CD4-positive, alpha-beta memory T cell (primary cell): ENCODE measurements at regions of chr10 and their contacts with region 1.

Region 1: GRCh38 chr10:14837757-14838581 is at the starts of genes CDNF, HSPA14 and MSANTD7:
- DNase-seq: peak; percentile 98 to 99 (median 99)
- H3K4me3 ChIP-seq: peak within 1 kb of the TSS; percentile 68 to 79
- H3K4me3 Mint-ChIP-seq: peak within 1 kb of the TSS; percentile 89 to 97 (median 94)
- H3K27ac ChIP-seq: peak within 1 kb of the TSS; percentile 91
- H3K27ac Mint-ChIP-seq: peak within 1 kb of the TSS; percentile 86 to 99 (median 98)
- H3K4me1 ChIP-seq: peaks cover 26% of the 10 kb centered on the region
- H3K4me1 Mint-ChIP-seq: peaks cover 14 to 33% (median 26%) of the 10 kb centered on the region in 4 donors
- H3K27me3 ChIP-seq: no peaks in the 10 kb centered on the region
- H3K27me3 Mint-ChIP-seq: no peaks in the 10 kb centered on the region
- total RNA-seq, gene CDNF: 1.7 to 2.5 TPM
- total RNA-seq, gene HSPA14: 16.0 to 17.7 TPM
- total RNA-seq, gene MSANTD7: 16.2 to 17.0 TPM

Region 2: DNA sequence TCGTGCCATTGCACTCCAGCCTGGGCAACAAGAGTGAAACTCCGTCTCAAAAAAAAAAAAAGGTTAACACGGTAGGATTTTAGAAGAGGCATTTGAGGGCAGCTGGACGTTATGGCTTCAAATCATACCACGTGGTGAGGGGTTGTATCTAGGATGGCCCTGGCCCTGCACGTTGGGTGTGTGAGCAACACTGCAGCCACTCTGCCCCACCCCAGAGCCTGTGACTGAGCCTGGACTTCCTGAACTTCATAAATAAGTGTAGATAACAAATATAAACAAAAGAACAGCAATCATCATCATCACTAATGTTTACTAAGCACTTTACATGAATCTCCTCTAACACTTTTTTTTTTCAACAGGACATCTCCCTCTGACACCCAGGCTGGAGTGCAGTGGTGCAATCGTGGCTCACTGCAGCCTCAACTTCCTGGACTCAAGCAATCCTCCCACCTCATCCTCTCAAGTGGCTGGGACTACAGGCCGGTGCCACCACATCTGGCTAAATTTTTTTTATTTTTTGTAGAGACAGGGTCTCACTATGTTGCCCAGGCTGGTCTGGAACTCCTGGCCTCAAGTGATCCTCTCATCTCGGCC is 337.7 kb before region 1 on chr10:
- CTCF ChIA-PET with region 1: interaction called, 4 read pairs
- POLR2A ChIA-PET with region 1: interaction called, 3 read pairs
- intact Hi-C with region 1: loop called (anchors 1 kb)
- DNase-seq: no peak
- H3K4me3 ChIP-seq: no peak overlapping the region
- H3K4me3 Mint-ChIP-seq: no peak overlapping the region
- H3K27ac ChIP-seq: no peak overlapping the region
- H3K27ac Mint-ChIP-seq: peak overlapping the region in 4 of 7 donors; percentile 7 to 72 (median 38)
- H3K4me1 ChIP-seq: peaks cover 6% of the 10 kb centered on the region
- H3K4me1 Mint-ChIP-seq: peaks cover 5 to 12% (median 7%) of the 10 kb centered on the region in 4 donors
- H3K27me3 ChIP-seq: no peaks in the 10 kb centered on the region
- H3K27me3 Mint-ChIP-seq: peaks cover 0 to 2% of the 10 kb centered on the region in 2 donors

Region 3: GRCh38 chr10:14556285-14556956 is 281.5 kb before region 1 on chr10:
- CTCF ChIA-PET with region 1: interaction called, 4 read pairs
- POLR2A ChIA-PET with region 1: interaction called, 11 read pairs
- intact Hi-C with region 1: loop called (anchors 5 kb)
- DNase-seq: peak in 4 of 5 donors; percentile 34 to 64 (median 47)
- H3K4me3 ChIP-seq: no peak overlapping the region
- H3K4me3 Mint-ChIP-seq: peak overlapping the region; percentile 53 to 87 (median 75)
- H3K27ac ChIP-seq: peak overlapping the region; percentile 65
- H3K27ac Mint-ChIP-seq: peak overlapping the region; percentile 93 to 97 (median 94)
- H3K4me1 ChIP-seq: peaks cover 100% of the 10 kb centered on the region
- H3K4me1 Mint-ChIP-seq: peaks cover 80 to 99% (median 89%) of the 10 kb centered on the region in 4 donors
- H3K27me3 ChIP-seq: no peaks in the 10 kb centered on the region
- H3K27me3 Mint-ChIP-seq: no peaks in the 10 kb centered on the region

Region 4: DNA sequence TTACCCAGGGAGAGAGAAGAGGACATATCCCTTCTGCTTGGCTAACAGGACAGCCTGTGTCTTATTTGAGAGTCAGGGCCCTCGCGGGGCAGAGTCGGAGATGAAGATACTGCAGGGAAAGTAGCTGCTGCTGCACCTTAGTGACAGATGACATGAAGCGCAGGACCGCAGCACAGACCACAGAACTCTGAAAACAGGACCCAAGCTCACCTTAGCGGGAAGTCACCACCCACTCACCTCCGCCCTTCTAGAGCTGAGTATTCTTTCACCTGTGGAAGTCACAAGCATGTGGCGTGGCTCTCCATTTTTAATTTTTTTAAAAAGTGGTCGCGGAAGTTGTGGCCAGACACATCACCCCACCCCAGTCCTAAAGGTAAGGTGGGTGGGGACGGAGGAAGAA is 254.7 kb before region 1 on chr10:
- CTCF ChIA-PET with region 1: no interaction called
- POLR2A ChIA-PET with region 1: interaction called, 15 read pairs
- intact Hi-C with region 1: loop called (anchors 5 kb)
- DNase-seq: peak; percentile 84 to 94 (median 89)
- H3K4me3 ChIP-seq: peak overlapping the region in 1 of 2 donors; percentile 15
- H3K4me3 Mint-ChIP-seq: peak overlapping the region; percentile 75 to 90 (median 82)
- H3K27ac ChIP-seq: peak overlapping the region; percentile 86
- H3K27ac Mint-ChIP-seq: peak overlapping the region; percentile 96 to 100 (median 98)
- H3K4me1 ChIP-seq: peaks cover 99% of the 10 kb centered on the region
- H3K4me1 Mint-ChIP-seq: peaks cover 76 to 99% (median 88%) of the 10 kb centered on the region in 4 donors
- H3K27me3 ChIP-seq: no peaks in the 10 kb centered on the region
- H3K27me3 Mint-ChIP-seq: no peaks in the 10 kb centered on the region

Region 5: GRCh38 chr10:14648005-14648765 is 189.8 kb before region 1 on chr10:
- CTCF ChIA-PET with region 1: interaction called, 3 read pairs
- POLR2A ChIA-PET with region 1: interaction called, 8 read pairs
- intact Hi-C with region 1: loop called (anchors 1 kb)
- DNase-seq: peak; percentile 87 to 95 (median 89)
- H3K4me3 ChIP-seq: peak overlapping the region in 1 of 2 donors; percentile 51
- H3K4me3 Mint-ChIP-seq: peak overlapping the region; percentile 85 to 91 (median 88)
- H3K27ac ChIP-seq: peak overlapping the region; percentile 96
- H3K27ac Mint-ChIP-seq: peak overlapping the region; percentile 98 to 100 (median 100)
- H3K4me1 ChIP-seq: peaks cover 54% of the 10 kb centered on the region
- H3K4me1 Mint-ChIP-seq: peaks cover 49 to 80% (median 57%) of the 10 kb centered on the region in 4 donors
- H3K27me3 ChIP-seq: no peaks in the 10 kb centered on the region
- H3K27me3 Mint-ChIP-seq: no peaks in the 10 kb centered on the region

Region 6: DNA sequence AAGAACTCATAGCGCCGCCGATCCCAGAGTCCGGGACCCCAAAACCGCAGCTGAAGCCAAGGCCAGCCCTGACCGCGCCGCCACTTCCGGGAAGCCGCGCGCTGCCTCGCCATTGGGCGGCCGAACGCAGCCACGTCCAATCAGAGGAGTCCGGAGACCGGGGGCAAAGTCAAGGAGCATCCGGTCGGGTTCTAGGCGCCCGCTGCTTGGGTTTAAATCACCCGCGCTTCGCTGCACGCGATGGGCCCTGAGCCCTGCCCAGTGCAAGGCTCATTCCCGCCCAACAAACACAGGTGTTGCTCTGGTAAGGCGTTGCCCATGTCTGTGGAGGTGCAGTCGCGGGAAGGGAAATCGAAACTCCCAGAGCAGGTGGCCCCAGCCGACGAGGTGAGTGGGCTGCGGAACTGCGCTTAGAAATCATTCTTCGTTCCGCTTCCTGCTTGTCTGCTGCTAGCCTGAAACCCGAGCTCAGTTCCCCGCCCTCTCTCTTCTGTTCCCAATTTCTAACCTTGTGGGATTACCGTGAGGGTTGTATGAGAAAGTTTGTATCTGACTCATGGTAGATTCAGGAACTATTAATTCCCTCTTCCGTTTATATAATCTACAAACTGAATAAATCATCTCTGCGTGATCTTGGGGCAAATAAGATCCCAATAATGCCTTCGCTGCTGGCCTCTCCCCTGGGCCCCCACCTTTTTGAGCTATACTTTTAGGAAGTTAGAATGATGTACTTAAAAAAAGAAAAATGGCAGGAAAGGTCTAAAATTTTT is 116.2 kb after region 1 on chr10 and contains the start of gene DCLRE1C:
- CTCF ChIA-PET with region 1: interaction called, 4 read pairs
- POLR2A ChIA-PET with region 1: interaction called, 19 read pairs
- intact Hi-C with region 1: loop called (anchors 1 kb)
- DNase-seq: peak; percentile 85 to 90 (median 89)
- H3K4me3 ChIP-seq: peak within 1 kb of the TSS; percentile 92 to 99
- H3K4me3 Mint-ChIP-seq: peak within 1 kb of the TSS; percentile 87 to 96 (median 92)
- H3K27ac ChIP-seq: peak within 1 kb of the TSS; percentile 73
- H3K27ac Mint-ChIP-seq: peak within 1 kb of the TSS; percentile 89 to 97 (median 96)
- H3K4me1 ChIP-seq: peaks cover 52% of the 10 kb centered on the region
- H3K4me1 Mint-ChIP-seq: peaks cover 37 to 73% (median 53%) of the 10 kb centered on the region in 4 donors
- H3K27me3 ChIP-seq: no peaks in the 10 kb centered on the region
- H3K27me3 Mint-ChIP-seq: no peaks in the 10 kb centered on the region
- total RNA-seq, gene DCLRE1C: 31.2 to 34.9 TPM

Region 7: GRCh38 chr10:15046626-15047025 is 208.7 kb after region 1 on chr10:
- CTCF ChIA-PET with region 1: no interaction called
- POLR2A ChIA-PET with region 1: no interaction called
- intact Hi-C with region 1: no loop called
- DNase-seq: no peak
- H3K4me3 ChIP-seq: no peak overlapping the region
- H3K4me3 Mint-ChIP-seq: no peak overlapping the region
- H3K27ac ChIP-seq: no peak overlapping the region
- H3K27ac Mint-ChIP-seq: no peak overlapping the region
- H3K4me1 ChIP-seq: no peaks in the 10 kb centered on the region
- H3K4me1 Mint-ChIP-seq: peaks cover 0 to 2% (median under 1%) of the 10 kb centered on the region in 4 donors
- H3K27me3 ChIP-seq: no peaks in the 10 kb centered on the region
- H3K27me3 Mint-ChIP-seq: peaks cover 1 to 2% of the 10 kb centered on the region in 2 donors

Region 8: DNA sequence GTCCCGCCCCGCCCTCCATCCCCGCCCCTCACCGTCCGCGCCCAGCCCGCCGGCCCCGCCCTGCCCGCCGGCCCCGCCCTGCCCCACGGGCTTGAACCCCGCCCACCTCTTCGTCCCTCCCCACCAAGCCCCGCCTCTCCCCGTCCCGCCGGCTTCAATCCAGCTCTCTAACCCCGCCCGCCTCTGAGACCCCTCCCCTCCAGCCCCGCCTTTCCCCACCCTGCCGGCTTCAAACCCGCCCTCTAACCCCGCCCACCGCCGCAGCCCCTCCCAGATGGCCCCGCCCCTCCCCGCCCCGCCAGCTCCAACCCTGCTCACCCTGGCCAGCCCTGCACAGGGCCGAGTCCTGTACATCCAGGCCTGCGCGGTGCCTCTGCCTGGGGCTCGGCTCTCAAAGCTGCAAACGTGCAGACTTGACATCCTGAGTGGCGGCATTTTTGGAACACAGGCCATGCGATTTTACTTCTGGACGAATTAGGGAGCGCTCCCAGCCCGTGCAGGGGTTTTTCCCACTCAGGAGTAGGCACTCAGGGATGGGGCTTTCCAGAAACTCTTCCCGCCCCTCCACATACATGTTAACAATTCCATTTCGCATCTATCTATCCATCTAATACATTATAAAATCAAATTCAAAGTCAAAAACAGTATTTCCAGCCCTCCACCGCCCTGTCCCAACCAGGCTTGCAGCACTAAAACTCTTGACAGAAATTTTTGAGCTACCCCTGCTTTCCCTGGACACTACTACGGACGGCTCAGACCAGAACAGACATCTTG is 331.0 kb after region 1 on chr10:
- CTCF ChIA-PET with region 1: interaction called, 3 read pairs
- POLR2A ChIA-PET with region 1: interaction called, 5 read pairs
- intact Hi-C with region 1: loop called (anchors 2 kb)
- DNase-seq: peak; percentile 88 to 96 (median 91)
- H3K4me3 ChIP-seq: peak overlapping the region; percentile 1 to 44
- H3K4me3 Mint-ChIP-seq: peak overlapping the region; percentile 85 to 93 (median 88)
- H3K27ac ChIP-seq: peak overlapping the region; percentile 46
- H3K27ac Mint-ChIP-seq: peak overlapping the region; percentile 73 to 97 (median 93)
- H3K4me1 ChIP-seq: peaks cover 74% of the 10 kb centered on the region
- H3K4me1 Mint-ChIP-seq: peaks cover 46 to 67% (median 57%) of the 10 kb centered on the region in 4 donors
- H3K27me3 ChIP-seq: no peaks in the 10 kb centered on the region
- H3K27me3 Mint-ChIP-seq: no peaks in the 10 kb centered on the region